CD8-positive, alpha-beta T cell (primary cell): ENCODE measurements at regions of chr7 and their contacts with region 1.

Region 1: GRCh38 chr7:94012746-94013145 is 8.6 kb upstream of the BET1 start:
- DNase-seq: no peak
- ATAC-seq: no peak
- H3K4me3 ChIP-seq: no peak overlapping the region
- H3K4me3 Mint-ChIP-seq: no peak overlapping the region
- H3K27ac ChIP-seq: no peak overlapping the region
- H3K27ac Mint-ChIP-seq: no peak overlapping the region
- H3K4me1 ChIP-seq: no peaks in the 10 kb centered on the region
- H3K4me1 Mint-ChIP-seq: no peaks in the 10 kb centered on the region
- H3K27me3 ChIP-seq: peaks cover 0 to 6% of the 10 kb centered on the region in 2 experiments
- H3K27me3 Mint-ChIP-seq: peaks cover 14% of the 10 kb centered on the region
- CTCF ChIP-seq: no peak

Region 2: GRCh38 chr7:94001396-94001795 is 11.3 kb before region 1 on chr7:
- CTCF ChIA-PET with region 1: no interaction called
- POLR2A ChIA-PET with region 1: no interaction called
- intact Hi-C with region 1: no loop called
- DNase-seq: no peak
- ATAC-seq: no peak
- H3K4me3 ChIP-seq: no peak overlapping the region
- H3K4me3 Mint-ChIP-seq: no peak overlapping the region
- H3K27ac ChIP-seq: no peak overlapping the region
- H3K27ac Mint-ChIP-seq: no peak overlapping the region
- H3K4me1 ChIP-seq: peaks cover 11% of the 10 kb centered on the region
- H3K4me1 Mint-ChIP-seq: peaks cover 51% of the 10 kb centered on the region
- H3K27me3 ChIP-seq: no peaks in the 10 kb centered on the region
- H3K27me3 Mint-ChIP-seq: peaks cover 3% of the 10 kb centered on the region
- CTCF ChIP-seq: no peak

Region 3: DNA sequence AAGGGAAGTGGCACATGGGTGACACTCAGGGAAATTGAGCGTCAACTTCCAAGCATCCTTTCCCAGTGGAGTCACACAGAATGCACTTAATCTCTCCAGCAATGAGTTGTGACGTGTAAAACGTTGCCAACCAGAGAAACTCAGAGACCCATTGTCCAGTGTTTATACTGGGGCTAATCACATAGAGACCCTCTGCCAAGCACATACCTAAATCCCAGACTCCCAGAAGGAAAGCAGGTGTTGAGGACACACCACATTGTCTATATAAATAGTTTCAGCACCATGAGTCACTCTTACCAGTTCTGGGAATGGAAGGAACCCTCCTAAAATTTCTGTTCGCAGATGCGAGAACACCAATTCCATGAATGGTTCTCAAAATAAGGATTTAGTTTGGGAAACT is 67.8 kb after region 1 on chr7:
- CTCF ChIA-PET with region 1: no interaction called
- POLR2A ChIA-PET with region 1: no interaction called
- intact Hi-C with region 1: no loop called
- DNase-seq: no peak
- ATAC-seq: no peak
- H3K4me3 ChIP-seq: no peak overlapping the region
- H3K4me3 Mint-ChIP-seq: no peak overlapping the region
- H3K27ac ChIP-seq: no peak overlapping the region
- H3K27ac Mint-ChIP-seq: no peak overlapping the region
- H3K4me1 ChIP-seq: no peaks in the 10 kb centered on the region
- H3K4me1 Mint-ChIP-seq: no peaks in the 10 kb centered on the region
- H3K27me3 ChIP-seq: no peaks in the 10 kb centered on the region
- H3K27me3 Mint-ChIP-seq: peaks cover 7% of the 10 kb centered on the region
- CTCF ChIP-seq: no peak

Region 4: GRCh38 chr7:94666879-94667587 is 654.3 kb after region 1 on chr7:
- CTCF ChIA-PET with region 1: no interaction called
- POLR2A ChIA-PET with region 1: no interaction called
- intact Hi-C with region 1: loop called in 1 of 2 experiments (anchors 10 kb)
- DNase-seq: no peak
- ATAC-seq: no peak
- H3K4me3 ChIP-seq: no peak overlapping the region
- H3K4me3 Mint-ChIP-seq: no peak overlapping the region
- H3K27ac ChIP-seq: no peak overlapping the region
- H3K27ac Mint-ChIP-seq: no peak overlapping the region
- H3K4me1 ChIP-seq: no peaks in the 10 kb centered on the region
- H3K4me1 Mint-ChIP-seq: no peaks in the 10 kb centered on the region
- H3K27me3 ChIP-seq: no peaks in the 10 kb centered on the region
- H3K27me3 Mint-ChIP-seq: peaks cover 28% of the 10 kb centered on the region
- CTCF ChIP-seq: no peak